IMR-90 (cell line): ENCODE measurements at regions of chr5 and their contacts with region 1.

Region 1: DNA sequence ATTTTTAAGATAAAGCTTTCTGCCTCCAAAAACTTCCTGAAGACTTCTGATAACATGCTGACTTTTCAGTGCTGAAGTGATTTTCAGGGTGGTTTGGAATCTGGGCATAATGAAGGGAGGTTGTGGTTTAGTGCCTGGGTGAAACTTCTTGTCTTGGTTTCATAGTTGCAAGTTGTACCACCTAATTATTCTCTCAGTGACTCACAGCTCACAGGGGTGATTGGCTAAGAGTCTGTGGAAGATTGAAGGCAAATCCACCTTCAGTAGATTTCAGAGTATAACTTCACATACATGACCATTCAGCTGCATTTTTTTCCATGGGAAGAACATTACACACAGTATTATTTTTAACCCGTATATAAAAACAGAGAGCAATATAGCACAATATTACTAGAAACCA is 199.9 kb downstream of the PTTG1 start:
- DNase-seq: no peak
- ATAC-seq: no peak
- H3K4me3 ChIP-seq: no peak overlapping the region
- H3K27ac ChIP-seq: no peak overlapping the region
- H3K4me1 ChIP-seq: no peaks in the 10 kb centered on the region
- H3K27me3 ChIP-seq: no peaks in the 10 kb centered on the region
- CTCF ChIP-seq: no peak
- POLR2A ChIP-seq: no peak
- RAD21 ChIP-seq: no peak

Region 2: DNA sequence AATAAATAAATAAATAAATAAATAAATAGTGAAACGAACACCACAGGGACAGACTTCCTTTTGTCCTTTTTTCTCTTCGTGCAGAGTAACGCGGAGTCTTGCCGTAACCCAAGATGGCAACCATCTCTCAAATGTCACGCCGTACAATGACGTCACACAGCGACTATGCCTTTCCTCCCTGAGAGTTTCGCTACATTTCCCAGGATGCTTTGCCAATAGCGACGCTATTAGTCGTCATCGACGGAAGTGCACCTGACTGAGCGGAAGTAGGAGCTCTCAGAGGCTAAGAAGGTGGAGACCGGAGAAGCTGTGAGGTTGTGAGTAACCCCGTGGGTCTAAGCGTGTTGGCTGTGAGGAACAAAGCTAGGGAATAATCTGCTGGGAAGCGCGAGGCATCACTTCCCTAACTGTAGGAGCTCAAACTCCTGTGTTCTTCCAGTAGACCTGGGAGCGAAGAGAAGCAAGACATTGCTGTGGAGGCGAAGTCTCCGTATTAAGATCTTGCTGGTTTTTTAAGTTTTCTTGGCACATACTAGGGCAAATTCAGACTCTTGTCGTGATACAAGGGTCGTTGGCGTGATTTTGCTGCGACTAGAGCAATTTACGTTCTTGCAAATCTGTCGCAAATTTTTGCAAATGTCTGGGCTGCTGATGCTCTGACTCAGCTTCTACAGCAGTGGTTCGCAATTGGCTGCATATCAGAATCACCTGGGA is 612.5 kb before region 1 on chr5 and contains the start of gene TTC1:
- CTCF ChIA-PET with region 1: no interaction called
- POLR2A ChIA-PET with region 1: no interaction called
- dilution Hi-C with region 1: no loop called
- in situ Hi-C with region 1: no loop called
- intact Hi-C with region 1: no loop called
- DNase-seq: peak; percentile 100
- ATAC-seq: peak; percentile 96
- H3K4me3 ChIP-seq: peak within 1 kb of the TSS; percentile 77
- H3K27ac ChIP-seq: peak within 1 kb of the TSS; percentile 62
- H3K4me1 ChIP-seq: peaks cover 1% of the 10 kb centered on the region
- H3K27me3 ChIP-seq: no peaks in the 10 kb centered on the region
- CTCF ChIP-seq: no peak
- POLR2A ChIP-seq: peak; percentile 90
- RAD21 ChIP-seq: no peak
- total RNA-seq, gene TTC1: 23.1 and 46.9 TPM in 2 replicates

Region 3: GRCh38 chr5:160496334-160496733 is 125.2 kb before region 1 on chr5:
- CTCF ChIA-PET with region 1: no interaction called
- POLR2A ChIA-PET with region 1: no interaction called
- dilution Hi-C with region 1: no loop called
- in situ Hi-C with region 1: no loop called
- intact Hi-C with region 1: no loop called
- DNase-seq: no peak
- ATAC-seq: no peak
- H3K4me3 ChIP-seq: no peak overlapping the region
- H3K27ac ChIP-seq: no peak overlapping the region
- H3K4me1 ChIP-seq: no peaks in the 10 kb centered on the region
- H3K27me3 ChIP-seq: peaks cover 12% of the 10 kb centered on the region
- CTCF ChIP-seq: no peak
- POLR2A ChIP-seq: no peak
- RAD21 ChIP-seq: no peak

Region 4: GRCh38 chr5:160520609-160521391 is 100.7 kb before region 1 on chr5:
- CTCF ChIA-PET with region 1: no interaction called
- POLR2A ChIA-PET with region 1: no interaction called
- dilution Hi-C with region 1: no loop called
- in situ Hi-C with region 1: no loop called
- intact Hi-C with region 1: no loop called
- DNase-seq: no peak
- ATAC-seq: no peak; the same call in 1 of the 2 replicates
- H3K4me3 ChIP-seq: no peak overlapping the region
- H3K27ac ChIP-seq: no peak overlapping the region
- H3K4me1 ChIP-seq: no peaks in the 10 kb centered on the region
- H3K27me3 ChIP-seq: no peaks in the 10 kb centered on the region
- CTCF ChIP-seq: no peak
- POLR2A ChIP-seq: no peak
- RAD21 ChIP-seq: no peak

Region 5: DNA sequence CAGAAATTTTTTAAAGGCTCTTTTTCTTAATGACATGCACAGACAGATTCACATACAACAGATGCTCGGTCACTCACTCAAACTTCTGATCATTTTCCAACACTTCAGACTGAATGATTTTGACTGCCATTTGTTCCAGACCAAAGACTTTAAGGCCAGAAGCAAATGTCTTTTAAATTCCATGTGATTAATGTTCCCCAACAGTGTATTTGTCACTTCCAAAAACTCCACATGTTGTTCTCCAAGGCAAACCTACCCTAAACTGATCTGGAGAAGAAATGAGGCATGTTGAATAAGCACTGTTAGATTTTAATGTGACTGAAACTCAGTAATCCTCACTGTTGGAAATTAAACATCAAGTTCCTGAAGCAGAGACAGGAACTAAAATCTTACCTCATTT is 1812.8 kb after region 1 on chr5:
- CTCF ChIA-PET with region 1: no interaction called
- POLR2A ChIA-PET with region 1: no interaction called
- dilution Hi-C with region 1: no loop called
- in situ Hi-C with region 1: no loop called
- intact Hi-C with region 1: loop called (anchors 5 kb)
- DNase-seq: no peak
- ATAC-seq: no peak
- H3K4me3 ChIP-seq: no peak overlapping the region
- H3K27ac ChIP-seq: no peak overlapping the region
- H3K4me1 ChIP-seq: no peaks in the 10 kb centered on the region
- H3K27me3 ChIP-seq: no peaks in the 10 kb centered on the region
- CTCF ChIP-seq: no peak
- POLR2A ChIP-seq: no peak
- RAD21 ChIP-seq: no peak